Activated B cell treated with CpG ODN at 0.5 μM for 24 hours (primary cell): ENCODE measurements at regions of chr9 and their contacts with region 1.

Region 1: DNA sequence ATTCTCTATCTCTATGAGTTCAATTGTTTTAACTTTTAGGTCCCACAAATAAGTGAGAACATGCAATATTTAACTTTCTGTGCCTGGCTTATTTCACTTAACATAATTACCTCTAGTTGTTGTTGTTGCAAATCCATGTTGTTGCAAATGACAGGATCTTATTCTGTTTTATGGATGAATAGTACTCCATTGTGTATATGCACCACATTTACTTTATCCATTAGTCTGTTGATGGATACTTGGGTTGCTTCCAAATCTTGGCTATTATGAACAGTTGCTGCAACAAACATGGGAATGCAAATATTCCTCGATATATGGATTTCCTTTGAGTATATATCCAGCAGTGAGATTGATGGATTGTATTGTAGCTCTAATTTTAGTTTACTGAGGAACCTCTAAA is 36.3 kb downstream of the MEGF9 start:
- DNase-seq: no peak
- ATAC-seq: no peak
- H3K4me3 Mint-ChIP-seq: no peak overlapping the region
- H3K27ac Mint-ChIP-seq: no peak overlapping the region
- H3K4me1 Mint-ChIP-seq: peaks cover 14% of the 10 kb centered on the region
- H3K27me3 Mint-ChIP-seq: no peaks in the 10 kb centered on the region
- CTCF ChIP-seq: no peak

Region 2: DNA sequence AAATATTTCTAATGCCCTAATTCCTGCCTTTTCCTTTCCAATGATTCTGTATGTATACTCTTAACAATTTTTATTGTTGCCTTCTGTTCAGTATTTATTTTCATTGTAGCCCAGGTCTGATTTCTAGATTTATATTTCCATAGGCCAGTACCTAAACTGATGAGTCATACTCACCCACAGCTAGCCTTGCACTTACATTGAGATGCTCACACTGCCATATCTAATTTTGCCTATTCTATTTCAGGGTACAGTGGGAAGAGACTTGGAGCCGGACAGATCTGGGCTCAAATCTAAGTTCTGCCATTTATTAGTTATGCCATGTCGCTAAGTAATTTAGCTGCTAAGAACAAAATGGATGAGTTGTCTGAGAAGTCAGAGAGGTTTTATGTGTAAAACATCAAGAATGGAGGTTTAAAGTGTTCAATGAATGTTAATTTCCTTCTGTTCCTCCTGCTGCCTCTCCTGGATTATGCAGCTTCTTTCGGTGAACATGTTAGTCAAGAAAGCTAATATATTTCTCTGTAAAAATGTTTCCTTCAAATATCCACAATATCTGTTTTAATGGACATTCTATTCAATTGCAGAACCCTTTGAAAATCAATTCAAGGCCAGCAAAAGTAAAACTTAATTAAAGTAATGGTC is 35.7 kb before region 1 on chr9:
- CTCF ChIA-PET with region 1: no interaction called
- POLR2A ChIA-PET with region 1: interaction called, 12 read pairs
- intact Hi-C with region 1: no loop called
- DNase-seq: no peak
- ATAC-seq: no peak
- H3K4me3 Mint-ChIP-seq: no peak overlapping the region
- H3K27ac Mint-ChIP-seq: no peak overlapping the region
- H3K4me1 Mint-ChIP-seq: no peaks in the 10 kb centered on the region
- H3K27me3 Mint-ChIP-seq: no peaks in the 10 kb centered on the region
- CTCF ChIP-seq: no peak